CD8-positive, alpha-beta T cell (primary cell): ENCODE measurements at regions of chr22 and their contacts with region 1.

Region 1: DNA sequence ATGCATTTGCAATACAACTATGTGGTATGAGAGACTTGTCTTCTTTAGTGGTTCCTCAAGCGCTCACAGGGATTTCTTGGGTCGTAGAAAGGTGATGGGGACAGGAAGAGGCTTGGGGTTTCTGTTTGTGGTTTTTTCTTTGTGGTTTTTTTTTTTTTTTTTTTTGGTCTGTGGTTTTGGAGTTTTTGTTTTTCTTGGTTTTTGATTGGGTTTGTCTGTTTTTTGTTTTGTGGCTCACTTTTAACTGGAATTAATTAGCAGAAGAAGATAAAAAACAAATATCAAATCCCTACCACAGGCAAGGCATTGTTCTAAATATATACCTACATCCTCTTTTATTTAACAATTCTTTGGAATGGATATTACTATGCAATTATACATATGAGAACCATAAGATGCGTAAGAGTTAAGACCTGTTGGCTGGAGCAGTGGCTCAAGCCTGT is 5.5 kb downstream of the TTC28 start:
- DNase-seq: peak in 5 of 9 experiments; percentile 18 to 87 (median 66)
- ATAC-seq: peak; percentile 95
- H3K4me3 ChIP-seq: no peak overlapping the region
- H3K4me3 Mint-ChIP-seq: peak overlapping the region; percentile 65
- H3K27ac ChIP-seq: no peak overlapping the region
- H3K27ac Mint-ChIP-seq: peak overlapping the region; percentile 93
- H3K4me1 ChIP-seq: peaks cover 23% of the 10 kb centered on the region
- H3K4me1 Mint-ChIP-seq: peaks cover 24% of the 10 kb centered on the region
- H3K27me3 ChIP-seq: peaks cover 26 to 48% of the 10 kb centered on the region in 2 experiments
- H3K27me3 Mint-ChIP-seq: peaks cover 59% of the 10 kb centered on the region
- CTCF ChIP-seq: no peak

Region 2: GRCh38 chr22:26860301-26860700 is 1813.8 kb before region 1 on chr22:
- CTCF ChIA-PET with region 1: no interaction called
- POLR2A ChIA-PET with region 1: no interaction called
- intact Hi-C with region 1: loop called in 1 of 2 experiments (anchors 10 kb)
- DNase-seq: no peak
- ATAC-seq: no peak
- H3K4me3 ChIP-seq: no peak overlapping the region
- H3K4me3 Mint-ChIP-seq: no peak overlapping the region
- H3K27ac ChIP-seq: no peak overlapping the region
- H3K27ac Mint-ChIP-seq: no peak overlapping the region
- H3K4me1 ChIP-seq: no peaks in the 10 kb centered on the region
- H3K4me1 Mint-ChIP-seq: no peaks in the 10 kb centered on the region
- H3K27me3 ChIP-seq: no peaks in the 10 kb centered on the region
- H3K27me3 Mint-ChIP-seq: no peaks in the 10 kb centered on the region
- CTCF ChIP-seq: no peak

Region 3: DNA sequence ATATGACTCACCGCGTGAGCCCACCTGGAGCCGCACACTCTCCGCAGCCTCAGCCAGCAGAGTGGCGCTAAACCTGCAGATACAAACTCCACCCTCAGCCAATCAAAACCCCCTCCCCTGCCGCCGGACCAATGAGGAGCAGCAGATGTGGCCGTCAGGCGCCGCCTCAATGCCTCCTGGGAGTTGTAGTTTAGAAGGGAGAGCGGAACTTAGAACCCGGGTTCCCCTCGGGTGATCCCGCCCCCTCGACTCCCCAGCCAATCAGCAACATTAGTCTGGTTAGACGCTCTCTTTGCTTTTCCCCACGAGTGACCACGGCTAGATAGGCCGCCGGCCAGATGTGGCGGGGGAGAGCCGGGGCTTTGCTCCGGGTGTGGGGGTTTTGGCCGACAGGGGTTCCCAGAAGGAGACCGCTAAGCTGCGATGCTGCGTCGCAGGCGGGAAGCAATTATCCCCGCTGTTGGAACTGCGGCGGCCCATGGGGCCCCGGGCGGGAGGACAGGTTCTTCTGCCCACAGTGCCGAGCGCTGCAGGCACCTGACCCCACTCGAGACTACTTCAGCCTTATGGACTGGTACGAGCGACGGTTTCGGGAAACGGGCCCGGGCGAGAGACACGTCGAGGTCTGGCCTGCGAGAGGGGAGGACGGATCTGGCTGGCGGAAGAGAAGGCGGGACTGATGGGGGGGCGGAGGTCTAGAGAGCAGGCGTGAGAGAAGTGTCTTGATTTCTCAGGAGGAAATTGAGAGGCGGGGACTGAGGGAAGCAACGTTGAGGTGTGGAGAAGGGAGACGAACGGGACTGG is 67.8 kb after region 1 on chr22 and contains the starts of genes CHEK2 and HSCB:
- CTCF ChIA-PET with region 1: no interaction called
- POLR2A ChIA-PET with region 1: interaction called, 3 read pairs
- intact Hi-C with region 1: loop called in 1 of 2 experiments (anchors 1 kb)
- DNase-seq: peak; percentile 94 to 99 (median 96)
- ATAC-seq: peak; percentile 94
- H3K4me3 ChIP-seq: peak within 1 kb of the TSS; percentile 85 to 98
- H3K4me3 Mint-ChIP-seq: peak within 1 kb of the TSS; percentile 88
- H3K27ac ChIP-seq: peak within 1 kb of the TSS; percentile 82 to 94
- H3K27ac Mint-ChIP-seq: peak within 1 kb of the TSS; percentile 92
- H3K4me1 ChIP-seq: peaks cover 13% of the 10 kb centered on the region
- H3K4me1 Mint-ChIP-seq: peaks cover 22% of the 10 kb centered on the region
- H3K27me3 ChIP-seq: no peaks in the 10 kb centered on the region
- H3K27me3 Mint-ChIP-seq: no peaks in the 10 kb centered on the region
- CTCF ChIP-seq: no peak
- total RNA-seq, gene CHEK2: 2.1 to 3.6 TPM
- total RNA-seq, gene HSCB: 4.8 to 5.9 TPM

Region 4: GRCh38 chr22:28951969-28952521 is 277.9 kb after region 1 on chr22:
- CTCF ChIA-PET with region 1: no interaction called
- POLR2A ChIA-PET with region 1: no interaction called
- intact Hi-C with region 1: loop called (anchors 5 to 10 kb)
- DNase-seq: no peak
- ATAC-seq: no peak
- H3K4me3 ChIP-seq: no peak overlapping the region
- H3K4me3 Mint-ChIP-seq: no peak overlapping the region
- H3K27ac ChIP-seq: no peak overlapping the region
- H3K27ac Mint-ChIP-seq: no peak overlapping the region
- H3K4me1 ChIP-seq: peaks cover 20% of the 10 kb centered on the region
- H3K4me1 Mint-ChIP-seq: peaks cover 17% of the 10 kb centered on the region
- H3K27me3 ChIP-seq: peaks cover 23% of the 10 kb centered on the region in 2 experiments
- H3K27me3 Mint-ChIP-seq: peaks cover 76% of the 10 kb centered on the region
- CTCF ChIP-seq: no peak

Region 5: GRCh38 chr22:29093501-29094300 is 419.6 kb after region 1 on chr22:
- CTCF ChIA-PET with region 1: no interaction called
- POLR2A ChIA-PET with region 1: no interaction called
- intact Hi-C with region 1: no loop called
- DNase-seq: no peak
- ATAC-seq: no peak
- H3K4me3 ChIP-seq: no peak overlapping the region
- H3K4me3 Mint-ChIP-seq: no peak overlapping the region
- H3K27ac ChIP-seq: no peak overlapping the region
- H3K27ac Mint-ChIP-seq: no peak overlapping the region
- H3K4me1 ChIP-seq: no peaks in the 10 kb centered on the region
- H3K4me1 Mint-ChIP-seq: no peaks in the 10 kb centered on the region
- H3K27me3 ChIP-seq: peaks cover 0 to 3% of the 10 kb centered on the region in 2 experiments
- H3K27me3 Mint-ChIP-seq: peaks cover 6% of the 10 kb centered on the region
- CTCF ChIP-seq: no peak